ENCODE measurements at regions of chr11 and their contacts with region 1.

Region 1: DNA sequence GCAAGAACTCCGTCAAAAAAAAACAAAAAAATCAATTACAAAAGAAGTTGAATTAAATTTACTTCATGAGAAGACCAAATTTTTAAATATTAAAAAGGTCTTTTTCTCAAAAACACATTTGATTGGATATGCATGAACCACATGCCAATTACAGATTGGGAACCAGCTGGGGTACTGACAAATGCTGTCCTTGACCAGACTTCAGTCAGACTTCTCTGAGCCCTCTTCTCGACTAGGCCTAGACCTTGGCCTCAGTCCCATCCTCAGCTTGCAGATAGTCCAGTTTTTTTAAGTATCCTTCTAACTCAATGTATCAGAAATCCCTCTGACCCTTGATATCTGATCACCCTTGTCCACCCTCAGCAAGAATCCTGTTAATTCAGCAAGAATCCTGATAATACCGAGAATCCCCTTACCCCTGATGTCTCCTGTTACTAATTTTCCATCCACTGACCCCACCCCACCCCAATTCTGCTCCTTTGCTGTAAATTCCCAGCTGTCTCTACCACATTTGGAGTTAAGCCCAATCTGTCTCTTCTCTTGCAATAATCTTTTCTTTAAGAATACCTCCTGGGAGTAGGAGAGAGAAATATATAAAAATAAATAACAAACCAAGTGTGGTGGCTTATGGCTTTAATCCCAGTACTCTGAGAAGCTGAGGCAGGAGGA is 30.9 kb downstream of the OR4D9 start:
- H3K4me3 ChIP-seq: no peak overlapping the region
- H3K27ac ChIP-seq: no peak overlapping the region
- H3K4me1 ChIP-seq: no peaks in the 10 kb centered on the region
- CTCF ChIP-seq: no peak

Region 2: GRCh38 chr11:59273373-59273841 is 268.9 kb before region 1 on chr11:
- CTCF ChIA-PET with region 1: no interaction called
- POLR2A ChIA-PET with region 1: no interaction called
- H3K4me3 ChIP-seq: no peak overlapping the region
- H3K27ac ChIP-seq: no peak overlapping the region
- H3K4me1 ChIP-seq: no peaks in the 10 kb centered on the region
- CTCF ChIP-seq: no peak

Region 3: GRCh38 chr11:59680287-59681154 is 138.2 kb after region 1 on chr11:
- CTCF ChIA-PET with region 1: interaction called, 13 read pairs
- POLR2A ChIA-PET with region 1: no interaction called
- H3K4me3 ChIP-seq: no peak overlapping the region
- H3K27ac ChIP-seq: no peak overlapping the region
- H3K4me1 ChIP-seq: no peaks in the 10 kb centered on the region
- CTCF ChIP-seq: peak; percentile 56